Spleen (tissue), 13 donors: ENCODE measurements at regions of chr14 and their contacts with region 1.

Region 1: GRCh38 chr14:51860164-51860824 is at the start of gene GNG2:
- DNase-seq: peak; percentile 96
- H3K4me3 ChIP-seq: peak within 1 kb of the TSS; percentile 50 to 79 (median 55)
- H3K27ac ChIP-seq: peak within 1 kb of the TSS; percentile 73 to 93 (median 89)
- H3K4me1 ChIP-seq: peaks cover 13 to 98% (median 65%) of the 10 kb centered on the region in 6 donors
- H3K27me3 ChIP-seq: no peaks in the 10 kb centered on the region
- CTCF ChIP-seq: peak in 1 of 11 experiments; percentile 8
- POLR2A ChIP-seq: peak; percentile 21 to 93 (median 80)
- total RNA-seq, gene GNG2: 77.4 to 180 (median 112) TPM

Region 2: DNA sequence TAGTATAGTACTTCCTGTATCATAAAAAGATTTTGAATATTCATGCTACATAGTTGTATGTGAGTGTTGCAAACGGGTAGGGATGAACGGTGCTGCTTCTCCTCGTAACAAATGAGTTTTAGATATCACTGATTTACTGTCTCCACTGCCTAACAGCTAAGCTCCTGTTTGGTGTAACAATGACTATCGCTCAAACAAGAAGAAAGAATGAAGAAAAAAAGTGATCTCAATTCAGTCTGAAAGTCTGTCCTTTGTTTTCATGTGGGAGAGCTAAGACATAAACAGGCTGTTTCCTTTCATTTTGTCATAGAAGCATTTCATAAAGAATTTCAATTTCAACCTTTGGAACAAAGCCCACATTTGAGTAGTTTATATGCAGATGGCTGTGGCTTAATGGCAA is 103.0 kb after region 1 on chr14:
- intact Hi-C with region 1: loop called (anchors 10 kb)
- DNase-seq: no peak
- H3K4me3 ChIP-seq: peak overlapping the region in 1 of 8 donors; percentile 16
- H3K27ac ChIP-seq: peak overlapping the region in 6 of 8 donors; percentile 3 to 41 (median 24)
- H3K4me1 ChIP-seq: peaks cover 0 to 32% (median 11%) of the 10 kb centered on the region in 6 donors
- H3K27me3 ChIP-seq: no peaks in the 10 kb centered on the region
- CTCF ChIP-seq: no peak
- POLR2A ChIP-seq: no peak